ENCODE measurements at regions of chr18 and their contacts with region 1.

Region 1: DNA sequence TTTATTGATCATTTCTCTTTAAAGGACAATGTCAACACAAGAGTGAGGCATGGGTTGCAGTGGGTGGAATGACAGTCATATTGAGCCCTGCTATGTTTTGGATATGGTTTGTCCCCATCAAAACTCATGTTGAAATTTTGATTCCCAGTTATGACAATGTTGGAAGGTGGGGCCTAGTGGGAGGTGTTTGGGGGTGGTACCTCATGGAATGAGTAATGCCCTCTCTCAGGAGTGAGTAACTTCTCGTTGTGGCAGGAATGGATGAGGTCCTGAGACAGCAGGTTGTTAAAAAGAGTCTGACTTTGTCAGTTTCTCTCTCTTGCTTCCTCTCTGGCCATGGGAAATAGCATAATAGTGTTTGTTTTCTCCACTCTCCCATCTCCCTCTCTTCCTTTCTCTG is 345.3 kb downstream of the DCC start:
- DNase-seq: no peak
- H3K4me3 ChIP-seq: no peak overlapping the region
- H3K27ac ChIP-seq: no peak overlapping the region
- H3K4me1 ChIP-seq: no peaks in the 10 kb centered on the region
- H3K27me3 ChIP-seq: no peaks in the 10 kb centered on the region
- CTCF ChIP-seq: no peak
- EP300 ChIP-seq: no peak
- POLR2A ChIP-seq: no peak

Region 2: DNA sequence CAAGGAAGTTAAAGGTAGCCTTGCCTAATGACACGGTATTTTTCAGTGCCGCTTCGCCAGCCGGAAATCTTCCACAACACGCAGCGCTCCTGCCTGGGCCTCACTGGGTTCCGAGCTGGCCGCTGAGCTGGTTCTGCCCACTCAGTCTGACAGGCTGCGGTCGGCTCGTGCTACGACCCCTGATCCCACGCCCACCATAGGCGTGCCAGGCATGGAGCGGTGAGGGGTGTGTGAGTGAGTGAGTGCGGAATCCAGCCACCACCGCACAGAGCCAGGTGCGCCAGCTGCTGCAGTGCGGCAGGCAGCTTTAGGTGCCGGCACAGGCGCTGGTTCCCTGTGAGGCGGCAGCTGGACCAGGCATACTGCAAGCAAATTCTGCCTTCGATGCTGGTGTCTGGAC is 62.6 kb after region 1 on chr18:
- intact Hi-C with region 1: loop called in 1 of 4 experiments (anchors 5 kb)
- DNase-seq: no peak
- H3K4me3 ChIP-seq: no peak overlapping the region
- H3K27ac ChIP-seq: no peak overlapping the region
- H3K4me1 ChIP-seq: no peaks in the 10 kb centered on the region
- H3K27me3 ChIP-seq: no peaks in the 10 kb centered on the region
- CTCF ChIP-seq: no peak
- EP300 ChIP-seq: no peak
- POLR2A ChIP-seq: no peak

Measured in ovary (tissue), 10 donors.